Activated T-helper 2 cell treated with anti-CD3 and anti-CD28 coated beads, Interferon-gamma antibody, Interleukin-2, Interleukin-4, amounts not matched to agents 10 μg/mL and 5 μg/mL and 100 μg/mL, durations not matched to agents 14 hours and 24 hours and 36 hours (primary cell): ENCODE measurements at regions of chr11 and their contacts with region 1.

Region 1: DNA sequence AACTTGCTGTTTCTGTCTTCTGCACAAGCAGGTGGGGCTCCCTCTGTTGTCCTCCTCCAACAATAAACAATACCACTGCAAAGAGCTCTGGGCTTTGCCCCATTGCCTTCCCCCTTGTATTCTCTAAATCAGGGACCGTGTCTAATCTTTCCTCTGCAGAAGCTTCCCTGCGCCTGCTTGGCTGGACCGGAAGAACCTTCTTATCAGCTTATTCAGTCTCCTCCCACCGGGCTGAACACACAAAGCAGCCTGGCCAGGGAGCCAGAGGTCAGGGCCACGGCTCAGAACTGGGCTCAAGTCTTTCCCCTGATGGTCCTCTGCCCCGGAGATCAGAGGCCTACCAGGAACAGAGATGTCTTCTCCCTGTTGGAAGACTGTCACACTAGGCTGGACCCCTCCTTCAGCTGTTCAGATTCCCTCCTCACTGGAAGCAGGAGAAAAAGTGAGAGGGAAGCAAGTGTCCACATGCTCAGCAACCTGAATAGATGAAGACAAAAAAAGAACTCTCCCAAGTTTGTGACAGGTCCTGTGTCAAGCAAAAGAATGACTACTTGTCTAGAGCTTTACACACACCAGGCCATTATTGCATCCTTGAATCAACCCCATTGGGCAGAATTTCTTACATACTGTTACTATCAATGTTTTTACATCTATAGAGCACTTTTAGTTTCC is 63.7 kb downstream of the RAB30 start:
- DNase-seq: no peak
- H3K4me3 Mint-ChIP-seq: peak overlapping the region; percentile 61
- H3K27ac Mint-ChIP-seq: peak overlapping the region; percentile 65
- H3K4me1 Mint-ChIP-seq: peaks cover 47% of the 10 kb centered on the region
- H3K27me3 Mint-ChIP-seq: no peaks in the 10 kb centered on the region

Region 2: GRCh38 chr11:81920205-81920604 is 1087.8 kb before region 1 on chr11:
- intact Hi-C with region 1: no loop called
- DNase-seq: no peak
- H3K4me3 Mint-ChIP-seq: no peak overlapping the region
- H3K27ac Mint-ChIP-seq: no peak overlapping the region
- H3K4me1 Mint-ChIP-seq: no peaks in the 10 kb centered on the region
- H3K27me3 Mint-ChIP-seq: no peaks in the 10 kb centered on the region

Region 3: GRCh38 chr11:82959987-82960778 is 47.9 kb before region 1 on chr11:
- intact Hi-C with region 1: loop called (anchors 1 kb)
- DNase-seq: peak; percentile 47
- H3K4me3 Mint-ChIP-seq: peak overlapping the region; percentile 34
- H3K27ac Mint-ChIP-seq: peak overlapping the region; percentile 31
- H3K4me1 Mint-ChIP-seq: peaks cover 52% of the 10 kb centered on the region
- H3K27me3 Mint-ChIP-seq: peaks cover 5% of the 10 kb centered on the region

Region 4: DNA sequence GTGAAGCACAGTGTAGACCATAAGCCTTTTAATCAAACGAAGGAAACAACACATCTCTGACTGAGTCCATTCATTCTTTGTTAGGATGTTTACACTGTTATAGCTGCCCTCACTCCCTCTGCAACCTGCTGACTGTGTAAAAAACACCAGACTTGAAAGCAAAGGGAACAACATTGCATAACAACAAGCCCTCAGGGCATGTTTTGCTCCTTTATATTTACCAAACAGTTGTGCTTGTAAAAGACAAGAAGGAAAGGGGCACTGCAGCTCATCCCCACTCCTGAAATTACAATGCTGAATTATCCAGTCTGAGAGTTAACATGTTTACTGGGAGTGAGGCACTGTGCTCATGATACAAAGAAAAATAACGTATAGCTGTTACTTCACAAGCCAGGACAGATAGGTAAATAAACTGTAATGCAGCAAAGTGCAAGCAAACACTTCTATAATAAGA is 17.2 kb after region 1 on chr11:
- intact Hi-C with region 1: no loop called
- DNase-seq: no peak
- H3K4me3 Mint-ChIP-seq: no peak overlapping the region
- H3K27ac Mint-ChIP-seq: no peak overlapping the region
- H3K4me1 Mint-ChIP-seq: peaks cover 28% of the 10 kb centered on the region
- H3K27me3 Mint-ChIP-seq: no peaks in the 10 kb centered on the region

Region 5: DNA sequence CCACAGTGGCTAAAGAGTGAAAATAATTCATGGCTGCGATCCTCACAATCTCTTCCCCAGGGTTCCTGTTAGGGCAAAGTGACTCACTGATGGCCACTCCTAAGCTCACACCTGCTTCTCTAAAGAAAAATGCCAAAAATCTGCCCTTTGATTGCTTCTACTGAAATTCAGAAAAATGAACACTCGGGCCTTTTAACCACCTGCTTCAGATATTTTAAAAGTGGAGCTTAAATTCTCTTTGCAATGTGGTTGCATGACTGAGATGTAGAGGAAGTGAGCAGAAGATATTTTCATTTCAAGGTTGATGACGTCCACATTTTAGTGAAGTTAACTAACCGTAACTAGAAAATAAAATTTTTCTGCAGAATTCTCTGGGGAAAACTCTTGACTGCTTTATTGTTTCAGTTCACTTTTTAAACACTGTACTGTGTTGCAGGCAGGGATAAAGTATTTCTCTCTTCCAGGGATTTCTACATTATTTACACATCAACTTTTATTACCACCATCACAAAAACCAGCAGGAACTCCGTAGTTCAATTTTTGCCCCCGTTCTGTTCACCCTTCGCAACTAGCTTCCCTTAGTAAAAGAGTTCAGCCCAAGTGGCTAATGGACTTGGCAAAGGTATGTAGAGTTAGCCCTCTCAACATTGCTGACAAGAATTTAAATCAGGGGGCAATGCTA is 55.2 kb after region 1 on chr11:
- intact Hi-C with region 1: loop called (anchors 2 kb)
- DNase-seq: no peak
- H3K4me3 Mint-ChIP-seq: peak overlapping the region; percentile 73
- H3K27ac Mint-ChIP-seq: peak overlapping the region; percentile 95
- H3K4me1 Mint-ChIP-seq: peaks cover 46% of the 10 kb centered on the region
- H3K27me3 Mint-ChIP-seq: no peaks in the 10 kb centered on the region